ENCODE measurements at regions of chr10 and their contacts with region 1.

Region 1: DNA sequence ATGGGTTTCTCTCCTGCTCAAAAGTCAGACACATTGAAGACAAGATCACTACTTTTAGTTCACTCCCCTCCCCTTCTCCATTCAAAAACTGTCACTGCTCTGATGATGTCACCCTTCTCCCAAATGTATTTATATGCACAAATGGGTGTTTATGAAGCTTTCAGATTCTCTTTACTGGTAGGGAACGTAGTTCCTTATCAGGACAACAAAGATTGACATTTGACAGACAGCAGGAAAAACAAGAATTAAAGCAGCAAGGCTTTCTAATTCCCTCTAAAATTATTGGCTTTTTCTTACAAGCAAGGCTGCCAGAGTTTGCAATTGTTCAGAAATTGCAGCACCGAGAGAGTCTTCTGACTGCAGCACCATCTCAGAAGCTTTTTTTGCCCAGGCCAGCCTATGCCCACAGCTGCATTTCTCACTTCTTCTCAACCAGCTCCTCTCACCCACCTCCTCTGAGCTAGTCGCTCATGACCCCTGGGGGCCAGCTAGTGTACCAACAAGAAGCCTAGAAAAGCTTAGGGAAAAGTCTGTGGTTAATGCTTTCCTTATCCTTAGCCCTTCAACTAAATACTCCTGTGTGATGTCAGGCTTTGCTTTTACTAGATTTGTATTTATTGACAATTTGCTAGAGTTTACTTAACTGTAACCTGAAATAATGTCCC is 265.1 kb downstream of the HTR7 start:
- DNase-seq: peak; percentile 30
- ATAC-seq: no peak
- H3K4me3 Mint-ChIP-seq: no peak overlapping the region
- H3K27ac Mint-ChIP-seq: no peak overlapping the region
- H3K4me1 Mint-ChIP-seq: no peaks in the 10 kb centered on the region
- H3K27me3 Mint-ChIP-seq: peaks cover 7% of the 10 kb centered on the region

Region 2: GRCh38 chr10:90148116-90148855 is 444.5 kb before region 1 on chr10:
- CTCF ChIA-PET with region 1: no interaction called
- POLR2A ChIA-PET with region 1: no interaction called
- intact Hi-C with region 1: loop called in 1 of 2 experiments (anchors 5 kb)
- DNase-seq: no peak
- ATAC-seq: no peak
- H3K4me3 Mint-ChIP-seq: no peak overlapping the region
- H3K27ac Mint-ChIP-seq: no peak overlapping the region
- H3K4me1 Mint-ChIP-seq: no peaks in the 10 kb centered on the region
- H3K27me3 Mint-ChIP-seq: no peaks in the 10 kb centered on the region

Region 3: GRCh38 chr10:90530521-90530920 is 62.2 kb before region 1 on chr10:
- CTCF ChIA-PET with region 1: no interaction called
- POLR2A ChIA-PET with region 1: no interaction called
- intact Hi-C with region 1: no loop called
- DNase-seq: no peak
- ATAC-seq: no peak
- H3K4me3 Mint-ChIP-seq: no peak overlapping the region
- H3K27ac Mint-ChIP-seq: no peak overlapping the region
- H3K4me1 Mint-ChIP-seq: no peaks in the 10 kb centered on the region
- H3K27me3 Mint-ChIP-seq: peaks cover 5% of the 10 kb centered on the region